ENCODE measurements at regions of chr17 and their contacts with region 1.

Region 1: DNA sequence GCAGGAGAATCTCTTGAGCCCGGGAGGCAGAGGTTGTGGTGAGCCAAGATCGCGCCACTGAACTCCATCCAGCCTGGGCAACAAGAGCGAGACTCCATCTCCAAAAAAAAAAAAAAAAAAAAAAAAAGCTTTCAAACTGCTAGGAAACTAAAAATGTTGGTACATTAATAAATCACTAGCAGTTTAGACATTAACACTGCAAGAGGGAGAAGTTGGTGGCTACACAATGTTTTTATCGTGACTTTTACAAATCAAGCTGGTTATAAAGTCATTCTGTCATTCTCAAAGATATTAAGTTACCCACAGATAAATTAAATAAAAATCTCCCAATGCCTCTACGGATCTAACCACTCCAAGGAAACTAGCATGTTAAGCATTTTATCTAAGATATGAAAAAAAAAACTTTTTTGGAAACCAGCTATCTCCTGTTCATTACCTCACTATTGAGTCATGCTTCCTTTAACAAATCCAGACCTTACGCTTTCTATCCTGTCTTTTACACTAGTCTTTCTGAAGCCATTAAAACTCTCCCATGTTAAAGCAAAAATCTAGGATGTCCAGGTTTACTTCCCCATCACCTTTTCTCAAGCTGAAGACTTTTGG is 85.9 kb upstream of the SMURF2 start:
- DNase-seq: no peak
- H3K4me3 ChIP-seq: no peak overlapping the region
- H3K27ac ChIP-seq: no peak overlapping the region
- H3K4me1 ChIP-seq: no peaks in the 10 kb centered on the region
- H3K27me3 ChIP-seq: no peaks in the 10 kb centered on the region
- CTCF ChIP-seq: no peak

Region 2: DNA sequence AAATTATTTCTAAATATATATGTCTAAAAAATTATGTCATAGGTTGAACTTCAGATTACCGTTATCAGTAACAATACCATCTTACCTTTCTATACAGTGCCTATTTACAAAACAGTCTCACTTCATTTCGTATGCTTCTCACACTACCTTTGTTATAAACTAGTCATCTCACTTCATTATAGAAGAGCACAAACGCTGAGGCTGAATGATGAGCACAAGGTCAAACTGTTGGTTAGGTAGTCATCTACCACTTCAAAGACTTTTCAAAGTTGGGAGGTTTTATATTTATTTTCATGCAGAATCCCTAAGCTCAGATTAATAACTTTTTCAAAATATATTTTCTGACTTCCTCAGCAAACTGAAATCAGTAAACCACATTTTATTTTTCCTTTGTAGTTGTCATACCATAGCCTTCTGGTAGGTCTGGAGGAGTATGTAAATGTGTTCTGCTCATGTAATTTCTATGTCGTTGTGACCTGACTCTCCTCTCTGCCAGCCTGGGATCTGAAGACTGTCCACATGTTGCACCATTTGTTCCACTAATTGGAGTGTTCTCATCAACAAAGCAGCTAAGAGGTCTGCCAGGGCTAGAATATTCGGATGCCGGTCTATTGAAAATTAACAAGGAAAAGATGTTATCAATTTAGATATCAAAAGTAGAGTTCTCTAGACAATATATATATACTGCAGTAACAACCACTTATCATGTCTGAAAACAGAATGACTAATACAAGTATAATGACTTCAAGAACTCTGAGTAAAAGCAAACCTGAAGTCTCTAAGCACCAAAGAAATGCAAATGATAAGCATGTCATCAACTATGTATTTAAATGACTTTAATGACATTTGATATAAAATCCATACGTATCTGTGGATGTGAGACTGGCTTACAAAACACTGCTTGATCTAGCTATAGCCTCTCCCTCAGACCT is 167.4 kb before region 1 on chr17:
- CTCF ChIA-PET with region 1: no interaction called
- POLR2A ChIA-PET with region 1: no interaction called
- intact Hi-C with region 1: loop called (anchors 10 kb)
- DNase-seq: no peak
- H3K4me3 ChIP-seq: no peak overlapping the region
- H3K27ac ChIP-seq: peak overlapping the region; percentile 7; the same call in 1 of the 2 replicates
- H3K4me1 ChIP-seq: no peaks in the 10 kb centered on the region
- H3K27me3 ChIP-seq: no peaks in the 10 kb centered on the region
- CTCF ChIP-seq: no peak

Region 3: DNA sequence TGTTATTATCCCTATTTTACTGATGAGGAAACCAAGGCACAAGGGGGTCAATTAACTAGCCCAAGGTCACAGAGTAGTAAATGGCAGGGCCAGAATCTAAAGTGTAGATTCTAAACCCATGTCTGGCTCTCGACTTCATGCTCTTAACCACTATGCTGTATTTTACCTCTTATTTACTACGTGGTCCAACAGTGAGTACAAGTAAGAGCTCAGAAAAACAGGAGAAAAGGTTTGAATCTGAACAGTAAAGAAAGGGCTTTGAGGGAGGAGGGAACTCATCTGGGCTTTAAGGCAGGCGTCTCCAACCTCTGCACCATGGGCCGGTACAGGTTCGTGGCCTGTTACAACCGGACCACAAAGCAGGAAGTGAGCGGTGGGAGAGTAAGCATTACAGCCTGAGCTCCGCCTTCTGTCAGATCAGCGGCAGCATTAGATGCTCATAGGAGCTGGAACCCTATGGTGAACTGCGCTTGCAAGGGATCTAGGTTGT is 148.8 kb before region 1 on chr17:
- CTCF ChIA-PET with region 1: no interaction called
- POLR2A ChIA-PET with region 1: no interaction called
- intact Hi-C with region 1: no loop called
- DNase-seq: no peak
- H3K4me3 ChIP-seq: no peak overlapping the region
- H3K27ac ChIP-seq: no peak overlapping the region
- H3K4me1 ChIP-seq: no peaks in the 10 kb centered on the region
- H3K27me3 ChIP-seq: no peaks in the 10 kb centered on the region
- CTCF ChIP-seq: no peak

Region 4: DNA sequence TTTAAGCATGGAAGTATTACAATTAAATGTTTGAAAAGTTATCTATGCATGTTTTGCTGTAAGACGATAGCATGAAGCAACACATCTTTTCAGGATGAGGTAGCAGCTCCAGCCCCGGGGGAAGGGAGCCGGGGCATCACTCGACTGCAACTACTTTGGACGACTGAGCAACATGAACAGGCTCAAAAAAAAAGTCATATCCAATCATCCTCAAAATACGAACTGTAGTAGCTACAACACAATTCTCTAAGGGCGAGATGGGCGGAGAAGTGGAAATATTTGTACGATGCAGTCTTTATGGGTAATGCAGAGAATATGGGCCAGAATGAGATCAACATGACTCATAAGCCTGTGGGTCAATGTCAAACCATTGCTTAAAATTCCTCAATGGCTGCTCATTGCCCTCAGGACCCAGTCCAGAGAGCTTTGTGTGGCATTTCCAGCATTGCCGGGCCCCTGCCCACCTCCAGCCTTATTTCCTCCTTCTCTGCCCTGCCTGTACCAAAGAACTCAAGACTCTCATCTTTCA is 68.3 kb before region 1 on chr17:
- CTCF ChIA-PET with region 1: no interaction called
- POLR2A ChIA-PET with region 1: no interaction called
- intact Hi-C with region 1: no loop called
- DNase-seq: peak; percentile 81 to 98
- H3K4me3 ChIP-seq: peak overlapping the region; percentile 42; the same call in 1 of the 2 replicates
- H3K27ac ChIP-seq: peak overlapping the region; percentile 96
- H3K4me1 ChIP-seq: peaks cover 57% of the 10 kb centered on the region
- H3K27me3 ChIP-seq: no peaks in the 10 kb centered on the region
- CTCF ChIP-seq: no peak